A673 (cell line): ENCODE measurements at regions of chr1 and their contacts with region 1.

Region 1: GRCh38 chr1:119647734-119648619 is at the start of gene ZNF697:
- DNase-seq: peak; percentile 96
- H3K4me3 ChIP-seq: peak within 1 kb of the TSS; percentile 74
- H3K27ac ChIP-seq: peak within 1 kb of the TSS; percentile 80
- H3K4me1 ChIP-seq: peaks cover 8% of the 10 kb centered on the region
- H3K27me3 ChIP-seq: peaks cover 3% of the 10 kb centered on the region
- CTCF ChIP-seq: peak; percentile 46
- total RNA-seq, gene ZNF697: 4.8 and 4.9 TPM in 2 replicates

Region 2: DNA sequence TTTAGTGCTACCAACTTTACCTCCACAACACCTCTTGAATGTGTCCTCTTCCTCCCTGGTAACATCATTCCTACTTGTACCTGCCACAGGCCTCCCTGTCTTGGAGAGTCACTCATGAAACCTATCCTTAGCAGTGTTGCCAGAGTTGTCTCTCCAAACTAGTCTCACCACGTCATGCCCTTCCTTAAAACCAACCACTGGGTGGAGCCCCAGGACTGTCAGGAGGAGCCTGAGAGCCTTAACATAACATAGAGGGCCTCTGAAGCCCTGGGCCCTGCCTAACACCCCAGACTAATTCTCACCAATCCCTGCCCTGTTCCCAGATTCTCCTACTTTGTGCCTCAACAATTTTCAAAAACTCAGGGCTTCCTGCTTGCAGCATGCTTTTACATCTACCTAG is 65.2 kb before region 1 on chr1:
- CTCF ChIA-PET with region 1: no interaction called
- POLR2A ChIA-PET with region 1: no interaction called
- intact Hi-C with region 1: no loop called
- DNase-seq: peak; percentile 68
- H3K4me3 ChIP-seq: no peak overlapping the region
- H3K27ac ChIP-seq: no peak overlapping the region
- H3K4me1 ChIP-seq: no peaks in the 10 kb centered on the region
- H3K27me3 ChIP-seq: no peaks in the 10 kb centered on the region
- CTCF ChIP-seq: peak; percentile 61

Region 3: DNA sequence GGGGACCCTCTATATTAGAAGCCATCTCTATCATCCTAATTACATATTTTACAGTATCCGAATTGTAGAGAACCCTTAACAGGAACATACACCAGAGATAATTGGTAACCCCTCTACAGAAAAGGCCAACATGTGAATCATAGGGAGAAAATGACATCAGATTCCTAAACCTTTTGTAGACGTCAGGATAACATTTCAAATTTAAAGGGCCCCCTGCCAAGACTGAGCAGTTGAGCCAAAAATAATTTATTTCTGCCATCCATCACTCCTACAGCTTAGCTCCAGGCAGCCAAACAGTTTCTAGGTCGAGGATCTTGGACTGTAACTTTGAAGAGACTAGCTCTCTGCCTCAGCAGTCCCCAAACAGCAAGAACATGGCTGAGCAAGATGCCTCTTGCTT is 21.1 kb before region 1 on chr1:
- CTCF ChIA-PET with region 1: no interaction called
- POLR2A ChIA-PET with region 1: no interaction called
- intact Hi-C with region 1: loop called (anchors 2 kb)
- DNase-seq: peak; percentile 54
- H3K4me3 ChIP-seq: no peak overlapping the region
- H3K27ac ChIP-seq: no peak overlapping the region
- H3K4me1 ChIP-seq: peaks cover 6% of the 10 kb centered on the region
- H3K27me3 ChIP-seq: peaks cover 4% of the 10 kb centered on the region
- CTCF ChIP-seq: no peak